ENCODE measurements at regions of chr19 and their contacts with region 1.

Region 1: GRCh38 chr19:9435279-9436268 is at the start of gene ZNF266:
- DNase-seq: peak; percentile 89 to 92 (median 91)
- H3K4me3 ChIP-seq: peak within 1 kb of the TSS; percentile 49 to 85
- H3K4me3 Mint-ChIP-seq: peak within 1 kb of the TSS; percentile 92 to 98 (median 96)
- H3K27ac ChIP-seq: peak within 1 kb of the TSS; percentile 87
- H3K27ac Mint-ChIP-seq: peak within 1 kb of the TSS; percentile 97 to 98 (median 98)
- H3K4me1 ChIP-seq: peaks cover 30% of the 10 kb centered on the region
- H3K4me1 Mint-ChIP-seq: peaks cover 20 to 49% (median 36%) of the 10 kb centered on the region in 4 donors
- H3K27me3 ChIP-seq: no peaks in the 10 kb centered on the region
- H3K27me3 Mint-ChIP-seq: no peaks in the 10 kb centered on the region
- total RNA-seq, gene ZNF266: 73.4 to 76.4 TPM

Region 2: GRCh38 chr19:9140159-9140874 is 295.3 kb before region 1 on chr19 and contains the start of gene ZNF317:
- CTCF ChIA-PET with region 1: no interaction called
- POLR2A ChIA-PET with region 1: no interaction called
- intact Hi-C with region 1: loop called (anchors 1 kb)
- DNase-seq: peak; percentile 88 to 95 (median 89)
- H3K4me3 ChIP-seq: peak within 1 kb of the TSS; percentile 82 to 88
- H3K4me3 Mint-ChIP-seq: peak within 1 kb of the TSS; percentile 95 to 99 (median 98)
- H3K27ac ChIP-seq: peak within 1 kb of the TSS; percentile 96
- H3K27ac Mint-ChIP-seq: peak within 1 kb of the TSS; percentile 95 to 99 (median 98)
- H3K4me1 ChIP-seq: peaks cover 25% of the 10 kb centered on the region
- H3K4me1 Mint-ChIP-seq: peaks cover 29 to 48% (median 37%) of the 10 kb centered on the region in 4 donors
- H3K27me3 ChIP-seq: no peaks in the 10 kb centered on the region
- H3K27me3 Mint-ChIP-seq: peaks cover 1 to 2% of the 10 kb centered on the region in 2 donors
- total RNA-seq, gene ZNF317: 52.1 to 52.4 TPM

Region 3: DNA sequence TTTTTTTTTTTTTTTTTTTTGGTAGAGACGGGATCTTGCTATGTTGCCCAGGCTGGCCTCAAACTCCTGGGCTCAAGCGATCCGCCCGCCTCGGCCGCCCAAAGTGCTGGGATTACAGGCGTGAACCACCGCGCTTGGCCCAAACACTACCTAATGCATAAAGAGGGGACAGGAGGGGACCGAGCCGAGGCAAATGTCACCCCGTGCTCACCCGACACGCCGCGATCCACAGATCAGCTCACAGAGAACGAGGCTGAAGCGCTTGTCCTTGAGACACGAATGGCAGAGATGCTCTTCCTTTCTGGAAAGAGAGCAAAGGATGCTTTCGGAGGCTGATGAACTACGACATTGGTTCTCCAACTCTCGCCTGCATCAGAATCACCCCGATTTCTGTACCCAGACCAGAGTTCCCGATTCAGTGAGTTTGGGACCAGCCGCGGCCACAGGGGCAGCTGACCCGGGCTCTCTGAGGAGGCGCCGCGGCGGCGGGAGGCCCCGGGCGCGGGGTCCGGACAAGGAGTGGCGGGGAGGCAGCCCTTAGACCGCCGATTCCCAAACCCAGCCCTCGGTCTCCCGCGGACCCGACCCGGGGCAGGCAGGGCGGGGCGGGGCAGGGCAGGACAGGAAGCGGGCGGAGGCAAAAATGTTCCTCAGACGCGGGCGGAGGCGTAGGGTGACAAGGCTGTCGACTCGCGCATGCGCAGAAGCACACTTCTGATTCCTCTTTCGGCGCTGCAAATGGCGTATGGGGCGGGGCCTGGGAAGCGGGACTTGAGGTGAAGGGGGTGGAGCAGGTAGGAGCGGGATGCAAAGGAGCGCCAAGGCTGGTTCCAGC is 126.2 kb before region 1 on chr19 and contains the start of gene ZNF699:
- CTCF ChIA-PET with region 1: interaction called, 9 read pairs
- POLR2A ChIA-PET with region 1: interaction called, 11 read pairs
- intact Hi-C with region 1: loop called (anchors 5 kb)
- DNase-seq: peak; percentile 97 to 100 (median 97)
- H3K4me3 ChIP-seq: peak within 1 kb of the TSS; percentile 92 to 93
- H3K4me3 Mint-ChIP-seq: peak within 1 kb of the TSS; percentile 89 to 99 (median 94)
- H3K27ac ChIP-seq: peak within 1 kb of the TSS; percentile 96
- H3K27ac Mint-ChIP-seq: peak within 1 kb of the TSS; percentile 88 to 99 (median 97)
- H3K4me1 ChIP-seq: peaks cover 23% of the 10 kb centered on the region
- H3K4me1 Mint-ChIP-seq: peaks cover 21 to 47% (median 34%) of the 10 kb centered on the region in 4 donors
- H3K27me3 ChIP-seq: no peaks in the 10 kb centered on the region
- H3K27me3 Mint-ChIP-seq: no peaks in the 10 kb centered on the region
- total RNA-seq, gene ZNF699: 20.9 to 22.1 TPM

Region 4: GRCh38 chr19:9467161-9467560 is 31.6 kb after region 1 on chr19:
- CTCF ChIA-PET with region 1: no interaction called
- POLR2A ChIA-PET with region 1: no interaction called
- intact Hi-C with region 1: no loop called
- DNase-seq: no peak
- H3K4me3 ChIP-seq: no peak overlapping the region
- H3K4me3 Mint-ChIP-seq: no peak overlapping the region
- H3K27ac ChIP-seq: no peak overlapping the region
- H3K27ac Mint-ChIP-seq: no peak overlapping the region
- H3K4me1 ChIP-seq: no peaks in the 10 kb centered on the region
- H3K4me1 Mint-ChIP-seq: no peaks in the 10 kb centered on the region
- H3K27me3 ChIP-seq: no peaks in the 10 kb centered on the region
- H3K27me3 Mint-ChIP-seq: no peaks in the 10 kb centered on the region

Region 5: DNA sequence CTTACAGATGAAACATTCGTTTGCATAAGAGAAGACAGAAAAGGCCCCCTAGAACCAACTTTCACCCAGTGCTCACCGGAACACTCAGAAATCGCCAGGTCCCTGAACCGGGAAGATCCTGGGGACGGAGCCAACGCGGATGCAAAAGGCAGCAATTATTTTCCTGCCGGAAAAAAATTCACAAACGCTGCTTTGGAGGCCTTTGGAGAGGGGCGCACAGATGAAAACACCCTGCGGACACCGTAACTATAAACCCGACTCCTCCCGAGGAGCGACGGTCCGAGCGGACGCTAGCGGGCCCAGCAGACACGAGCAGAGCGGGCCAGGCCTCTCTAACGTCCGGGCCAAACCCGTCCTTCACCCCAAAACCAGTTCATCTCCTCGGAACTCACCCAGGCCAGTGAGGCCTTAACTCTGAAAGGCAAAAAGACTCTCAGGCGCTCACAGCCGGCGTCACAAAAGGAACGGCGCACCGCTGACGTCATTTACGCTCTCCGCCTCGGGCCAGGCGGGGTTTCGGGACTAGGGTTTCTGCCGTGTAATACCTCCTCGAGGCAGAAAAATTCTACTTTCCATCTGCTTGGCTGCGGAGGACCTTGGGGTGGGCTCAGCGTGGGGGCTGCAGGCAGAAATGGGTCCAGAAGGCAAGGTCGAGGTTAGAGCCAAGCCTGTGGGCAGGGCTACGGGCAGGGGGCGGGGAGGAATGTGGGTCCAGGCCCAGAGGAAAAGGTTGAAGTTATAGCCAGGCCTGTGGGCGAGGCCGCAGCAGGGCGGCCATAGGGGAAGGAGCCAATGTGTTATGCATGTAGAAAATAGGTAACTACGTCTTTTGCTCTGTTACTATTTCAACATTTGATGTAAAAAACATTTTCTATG is 102.8 kb after region 1 on chr19 and contains the start of gene ZNF426:
- CTCF ChIA-PET with region 1: interaction called, 3 read pairs
- POLR2A ChIA-PET with region 1: interaction called, 7 read pairs
- intact Hi-C with region 1: loop called (anchors 5 kb)
- DNase-seq: peak; percentile 83 to 88 (median 86)
- H3K4me3 ChIP-seq: peak within 1 kb of the TSS; percentile 80 to 86
- H3K4me3 Mint-ChIP-seq: peak within 1 kb of the TSS; percentile 92 to 98 (median 96)
- H3K27ac ChIP-seq: peak within 1 kb of the TSS; percentile 82
- H3K27ac Mint-ChIP-seq: peak within 1 kb of the TSS; percentile 89 to 100 (median 98)
- H3K4me1 ChIP-seq: peaks cover 12% of the 10 kb centered on the region
- H3K4me1 Mint-ChIP-seq: peaks cover 13 to 36% (median 25%) of the 10 kb centered on the region in 4 donors
- H3K27me3 ChIP-seq: no peaks in the 10 kb centered on the region
- H3K27me3 Mint-ChIP-seq: no peaks in the 10 kb centered on the region
- total RNA-seq, gene ZNF426: 18.0 to 18.2 TPM

Region 6: GRCh38 chr19:9566729-9567128 is 131.2 kb after region 1 on chr19:
- CTCF ChIA-PET with region 1: no interaction called
- POLR2A ChIA-PET with region 1: no interaction called
- intact Hi-C with region 1: no loop called
- DNase-seq: no peak
- H3K4me3 ChIP-seq: no peak overlapping the region
- H3K4me3 Mint-ChIP-seq: peak overlapping the region in 1 of 8 donors; percentile 22
- H3K27ac ChIP-seq: no peak overlapping the region
- H3K27ac Mint-ChIP-seq: no peak overlapping the region
- H3K4me1 ChIP-seq: no peaks in the 10 kb centered on the region
- H3K4me1 Mint-ChIP-seq: peaks cover 0 to 6% (median 2%) of the 10 kb centered on the region in 4 donors
- H3K27me3 ChIP-seq: no peaks in the 10 kb centered on the region
- H3K27me3 Mint-ChIP-seq: no peaks in the 10 kb centered on the region

Region 7: GRCh38 chr19:9768175-9769112 is 332.9 kb after region 1 on chr19 and contains the start of gene ZNF846:
- CTCF ChIA-PET with region 1: no interaction called
- POLR2A ChIA-PET with region 1: interaction called, 12 read pairs
- intact Hi-C with region 1: loop called (anchors 10 kb)
- DNase-seq: peak; percentile 91 to 94 (median 92)
- H3K4me3 ChIP-seq: peak within 1 kb of the TSS; percentile 98 to 100
- H3K4me3 Mint-ChIP-seq: peak within 1 kb of the TSS; percentile 94 to 99 (median 96)
- H3K27ac ChIP-seq: peak within 1 kb of the TSS; percentile 94
- H3K27ac Mint-ChIP-seq: peak within 1 kb of the TSS; percentile 98 to 100 (median 99)
- H3K4me1 ChIP-seq: peaks cover 15% of the 10 kb centered on the region
- H3K4me1 Mint-ChIP-seq: peaks cover 6 to 12% (median 9%) of the 10 kb centered on the region in 4 donors
- H3K27me3 ChIP-seq: no peaks in the 10 kb centered on the region
- H3K27me3 Mint-ChIP-seq: no peaks in the 10 kb centered on the region
- total RNA-seq, gene ZNF846: 16.9 to 19.7 TPM

Measured in CD4-positive, alpha-beta memory T cell (primary cell).